GM23248 (cell line): ENCODE measurements at regions of chrX and their contacts with region 1.

Region 1: GRCh38 chrX:48917139-48918001 is 1.5 kb downstream of the PIM2 start:
- DNase-seq: peak; percentile 88
- H3K4me3 ChIP-seq: no peak overlapping the region
- H3K27ac ChIP-seq: peak overlapping the region; percentile 46
- H3K4me1 ChIP-seq: peaks cover 12% of the 10 kb centered on the region; the same call in 1 of the 2 replicates
- H3K27me3 ChIP-seq: no peaks in the 10 kb centered on the region

Region 2: DNA sequence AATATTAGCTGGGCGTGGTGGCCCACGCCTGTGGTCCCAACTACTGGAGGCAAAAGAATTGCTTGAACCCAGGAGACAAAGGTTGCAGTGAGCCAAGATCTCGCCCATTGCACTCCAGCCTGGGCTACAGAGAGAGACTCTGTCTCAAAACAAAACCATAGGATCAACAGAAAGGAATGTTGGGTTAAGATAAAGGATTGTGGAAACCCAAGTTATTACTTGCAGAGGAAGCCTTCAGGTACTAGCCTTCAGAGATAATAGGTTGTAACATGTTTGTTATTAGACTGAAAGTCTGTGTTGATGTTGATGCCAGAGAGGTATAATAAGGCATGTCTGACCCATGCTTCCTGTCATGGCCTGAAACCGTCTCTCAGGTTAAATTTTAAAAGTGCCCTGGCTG is 737.7 kb before region 1 on chrX:
- in situ Hi-C with region 1: no loop called
- DNase-seq: no peak
- H3K4me3 ChIP-seq: no peak overlapping the region
- H3K27ac ChIP-seq: no peak overlapping the region
- H3K4me1 ChIP-seq: no peaks in the 10 kb centered on the region
- H3K27me3 ChIP-seq: no peaks in the 10 kb centered on the region

Region 3: DNA sequence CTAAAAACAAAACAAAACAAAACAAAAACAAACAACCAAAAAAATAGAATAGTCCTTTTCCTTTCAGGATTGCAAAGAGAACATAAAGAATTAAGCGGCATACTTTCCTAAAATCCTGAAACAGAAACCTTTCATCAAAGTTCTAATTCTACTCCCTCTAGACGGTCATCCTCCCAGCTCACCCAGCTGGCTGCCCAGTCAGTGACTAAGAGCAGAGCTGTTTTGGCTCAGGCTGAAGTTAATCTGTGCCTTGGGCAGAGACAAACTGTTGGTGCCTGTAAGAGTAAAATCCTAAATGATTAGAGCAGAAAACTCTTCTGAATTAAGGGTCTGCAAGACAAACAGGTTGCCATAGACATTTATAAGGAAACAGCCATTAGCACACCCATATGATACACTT is 251.4 kb before region 1 on chrX:
- in situ Hi-C with region 1: loop called (anchors 25 kb)
- DNase-seq: peak; percentile 64
- H3K4me3 ChIP-seq: no peak overlapping the region
- H3K27ac ChIP-seq: no peak overlapping the region
- H3K4me1 ChIP-seq: no peaks in the 10 kb centered on the region
- H3K27me3 ChIP-seq: no peaks in the 10 kb centered on the region